ENCODE measurements at regions of chr3 and their contacts with region 1.

Region 1: DNA sequence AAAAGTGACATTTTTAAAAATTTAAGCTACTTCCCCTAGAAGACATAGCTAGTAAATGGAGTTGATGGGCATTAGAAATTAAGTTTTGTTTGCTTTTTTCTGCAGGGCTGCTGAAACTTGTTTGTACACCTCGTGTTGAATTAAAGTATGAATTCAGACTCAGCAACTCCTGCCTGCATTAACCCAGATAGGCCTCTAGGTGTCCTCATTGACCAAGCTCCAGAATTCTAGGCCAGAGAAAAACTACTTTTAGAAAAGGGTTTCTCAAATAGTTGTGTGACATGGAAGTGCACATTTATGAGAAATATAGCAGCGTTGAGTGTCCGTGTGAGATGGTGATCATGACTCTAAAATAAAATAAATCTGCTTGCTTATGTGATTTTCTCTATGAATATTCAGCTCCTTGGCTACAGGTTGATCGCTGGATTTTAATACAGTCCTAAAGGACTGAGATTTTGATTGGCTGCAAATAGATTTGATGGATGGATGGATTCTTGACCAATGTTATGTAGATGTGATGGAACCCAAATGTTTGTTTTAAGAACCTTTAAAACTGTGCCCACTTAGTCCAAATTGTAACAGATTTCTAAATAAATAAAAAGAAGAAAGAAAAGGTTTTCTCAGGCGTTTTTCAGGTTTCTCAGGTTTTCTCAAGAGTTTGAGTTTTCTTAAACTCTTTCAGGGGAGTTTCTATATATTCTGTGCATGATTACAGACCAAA is 39.4 kb upstream of the LMOD3 start:
- DNase-seq: peak; percentile 51
- ATAC-seq: no peak
- H3K4me3 ChIP-seq: no peak overlapping the region
- H3K27ac ChIP-seq: no peak overlapping the region
- H3K4me1 ChIP-seq: no peaks in the 10 kb centered on the region
- H3K27me3 ChIP-seq: no peaks in the 10 kb centered on the region
- CTCF ChIP-seq: peak; percentile 82

Region 2: DNA sequence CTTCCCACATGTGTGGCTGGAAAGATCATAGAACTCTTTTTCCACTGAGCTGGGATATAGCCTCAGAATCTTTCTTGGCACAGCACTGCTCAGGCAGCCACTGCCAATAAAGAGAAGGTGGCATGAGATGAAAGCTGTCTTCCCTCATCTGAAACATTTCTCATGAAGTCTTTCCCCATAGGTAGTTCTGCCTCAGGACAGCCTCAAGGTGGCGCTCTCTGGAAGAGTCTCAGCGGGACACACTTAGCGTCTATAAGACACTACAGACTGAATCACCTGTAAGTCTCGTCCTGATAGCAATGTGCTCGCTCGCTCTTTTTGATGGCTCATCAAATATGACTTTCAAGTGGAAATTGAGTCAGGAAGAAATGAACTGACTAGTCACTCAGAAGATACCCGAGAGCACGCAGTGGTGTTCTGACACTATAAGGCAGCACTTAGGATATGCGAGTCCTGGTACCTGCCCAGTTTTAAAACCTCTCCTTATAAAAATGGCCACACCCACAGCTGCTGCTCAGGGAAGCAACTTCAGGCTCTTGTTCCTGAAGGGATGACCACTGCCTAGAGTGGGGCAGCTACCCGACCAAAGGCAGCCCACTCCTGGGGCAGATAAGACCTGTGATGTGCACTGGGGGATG is 1776.9 kb before region 1 on chr3:
- CTCF ChIA-PET with region 1: no interaction called
- POLR2A ChIA-PET with region 1: no interaction called
- in situ Hi-C with region 1: no loop called
- intact Hi-C with region 1: no loop called
- DNase-seq: no peak
- ATAC-seq: no peak
- H3K4me3 ChIP-seq: no peak overlapping the region
- H3K27ac ChIP-seq: no peak overlapping the region
- H3K4me1 ChIP-seq: no peaks in the 10 kb centered on the region
- H3K27me3 ChIP-seq: no peaks in the 10 kb centered on the region
- CTCF ChIP-seq: peak; percentile 69

Region 3: DNA sequence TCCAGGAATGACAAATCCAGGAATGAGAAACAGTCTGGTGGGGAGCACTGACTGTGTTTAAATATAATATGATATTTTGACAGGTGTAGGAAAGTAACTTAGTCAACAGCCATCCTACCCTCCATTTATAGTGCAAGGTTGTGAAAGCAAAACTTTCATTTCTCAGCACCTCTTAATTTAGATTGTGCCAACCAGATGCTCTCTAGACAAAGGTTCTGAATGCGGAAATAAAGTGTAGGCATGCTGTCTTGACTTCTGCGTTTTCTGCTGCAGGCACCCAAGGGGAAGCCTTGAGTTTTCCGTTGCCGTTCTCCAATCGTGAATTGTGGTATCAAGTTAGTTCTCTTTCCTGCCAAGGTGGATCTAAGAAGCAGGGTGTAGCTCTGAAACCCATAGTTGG is 1245.4 kb before region 1 on chr3:
- CTCF ChIA-PET with region 1: interaction called, 10 read pairs
- POLR2A ChIA-PET with region 1: no interaction called
- in situ Hi-C with region 1: no loop called
- intact Hi-C with region 1: no loop called
- DNase-seq: no peak
- ATAC-seq: no peak
- H3K4me3 ChIP-seq: no peak overlapping the region
- H3K27ac ChIP-seq: no peak overlapping the region
- H3K4me1 ChIP-seq: no peaks in the 10 kb centered on the region
- H3K27me3 ChIP-seq: no peaks in the 10 kb centered on the region
- CTCF ChIP-seq: no peak

Region 4: DNA sequence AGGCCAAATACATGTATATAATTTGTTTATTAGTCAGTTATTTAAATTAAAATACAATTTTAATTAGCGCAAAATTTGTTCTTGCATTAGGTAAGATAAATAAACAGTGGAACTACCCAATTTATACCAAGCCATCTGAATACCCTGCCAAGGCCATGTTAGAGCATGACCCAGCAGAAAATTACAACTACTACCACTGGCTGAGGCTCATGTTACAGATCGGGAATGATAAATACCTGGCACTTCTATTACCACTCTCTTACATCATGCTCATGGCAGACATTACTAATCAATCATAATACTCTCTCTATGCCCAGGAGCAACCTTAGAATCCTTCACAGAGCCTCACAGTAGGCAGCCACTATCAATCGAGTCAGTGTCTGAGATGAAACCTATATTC is 18.1 kb before region 1 on chr3:
- CTCF ChIA-PET with region 1: interaction called, 15 read pairs
- POLR2A ChIA-PET with region 1: no interaction called
- in situ Hi-C with region 1: no loop called
- intact Hi-C with region 1: no loop called
- DNase-seq: no peak
- ATAC-seq: no peak
- H3K4me3 ChIP-seq: no peak overlapping the region
- H3K27ac ChIP-seq: no peak overlapping the region
- H3K4me1 ChIP-seq: no peaks in the 10 kb centered on the region
- H3K27me3 ChIP-seq: no peaks in the 10 kb centered on the region
- CTCF ChIP-seq: no peak

Region 5: GRCh38 chr3:69271098-69271497 is 109.4 kb after region 1 on chr3:
- CTCF ChIA-PET with region 1: no interaction called
- POLR2A ChIA-PET with region 1: no interaction called
- in situ Hi-C with region 1: no loop called
- intact Hi-C with region 1: no loop called
- DNase-seq: no peak
- ATAC-seq: no peak
- H3K4me3 ChIP-seq: no peak overlapping the region
- H3K27ac ChIP-seq: no peak overlapping the region
- H3K4me1 ChIP-seq: no peaks in the 10 kb centered on the region
- H3K27me3 ChIP-seq: no peaks in the 10 kb centered on the region
- CTCF ChIP-seq: no peak

Region 6: GRCh38 chr3:69425261-69425660 is 263.5 kb after region 1 on chr3:
- CTCF ChIA-PET with region 1: no interaction called
- POLR2A ChIA-PET with region 1: no interaction called
- in situ Hi-C with region 1: no loop called
- intact Hi-C with region 1: loop called (anchors 5 kb)
- DNase-seq: peak; percentile 17
- ATAC-seq: peak; percentile 78; the same call in 1 of the 2 replicates
- H3K4me3 ChIP-seq: no peak overlapping the region
- H3K27ac ChIP-seq: no peak overlapping the region
- H3K4me1 ChIP-seq: no peaks in the 10 kb centered on the region
- H3K27me3 ChIP-seq: no peaks in the 10 kb centered on the region
- CTCF ChIP-seq: peak; percentile 60

Region 7: GRCh38 chr3:69671082-69671952 is 509.6 kb after region 1 on chr3:
- CTCF ChIA-PET with region 1: no interaction called
- POLR2A ChIA-PET with region 1: no interaction called
- in situ Hi-C with region 1: no loop called
- intact Hi-C with region 1: loop called (anchors 5 kb)
- DNase-seq: no peak
- ATAC-seq: no peak
- H3K4me3 ChIP-seq: no peak overlapping the region
- H3K27ac ChIP-seq: no peak overlapping the region
- H3K4me1 ChIP-seq: no peaks in the 10 kb centered on the region
- H3K27me3 ChIP-seq: no peaks in the 10 kb centered on the region
- CTCF ChIP-seq: peak; percentile 69; the same call in 1 of the 2 replicates

Measured in Panc1 (cell line).